Posterior cingulate gyrus (tissue), 11 donors: ENCODE measurements at regions of chr12 and their contacts with region 1.

Region 1: DNA sequence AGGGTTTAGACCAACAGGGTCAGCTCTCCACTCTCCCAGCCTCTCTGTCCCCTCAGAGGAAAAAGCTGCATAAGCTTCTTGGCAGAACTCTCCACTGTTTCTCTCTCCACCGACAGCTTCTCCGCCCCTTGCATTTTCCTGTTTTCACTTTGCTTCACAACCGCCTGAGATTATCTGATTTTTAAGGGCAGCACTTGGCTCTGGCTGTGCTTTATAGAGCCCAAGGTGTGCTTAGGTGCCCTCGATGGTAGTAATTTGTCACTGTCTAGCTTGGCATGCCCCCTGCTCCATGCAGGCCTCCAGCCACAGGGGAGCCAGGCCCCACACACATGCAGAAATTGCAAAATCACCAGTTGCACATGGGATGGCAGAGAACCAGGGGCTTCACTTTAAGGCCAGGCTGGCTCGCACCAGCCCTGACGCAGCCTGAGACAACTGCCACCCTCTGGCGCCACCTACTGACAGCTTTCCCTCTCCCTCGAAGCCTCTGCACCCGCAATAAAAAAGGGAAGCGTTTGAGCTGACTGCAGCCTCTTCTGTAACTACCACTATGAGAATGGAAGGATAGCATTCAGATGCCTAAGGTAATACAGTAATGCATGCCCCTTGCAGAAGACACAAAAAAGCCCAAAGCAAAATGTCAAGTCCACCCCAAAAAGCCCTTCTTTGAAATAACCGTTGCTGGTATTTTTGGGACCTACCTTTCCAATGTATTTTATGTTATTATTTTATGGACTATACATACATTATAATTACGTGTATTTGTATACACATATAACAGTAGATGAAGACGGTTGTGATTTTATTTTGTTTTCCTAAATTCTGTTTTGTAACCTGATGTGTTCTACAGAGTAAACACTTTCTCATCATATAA is 32.0 kb upstream of the RIMBP2 start:
- DNase-seq: peak; percentile 73 to 97 (median 84)

Region 2: GRCh38 chr12:130041983-130042812 is 705.9 kb before region 1 on chr12:
- intact Hi-C with region 1: loop called (anchors 5 kb)
- DNase-seq: peak; percentile 69 to 97 (median 86)

Region 3: GRCh38 chr12:130401703-130402102 is 346.4 kb before region 1 on chr12:
- intact Hi-C with region 1: loop called (anchors 5 kb)
- DNase-seq: no peak

Region 4: GRCh38 chr12:130460611-130461478 is 287.3 kb before region 1 on chr12:
- intact Hi-C with region 1: loop called (anchors 10 kb)
- DNase-seq: peak in 2 of 10 donors; percentile 69 to 70

Region 5: GRCh38 chr12:130813436-130813835 is 65.3 kb after region 1 on chr12:
- intact Hi-C with region 1: no loop called
- DNase-seq: no peak

Region 6: GRCh38 chr12:130826149-130826801 is 78.2 kb after region 1 on chr12:
- intact Hi-C with region 1: no loop called
- DNase-seq: peak in 5 of 10 donors; percentile 20 to 92 (median 62)